Activated T-helper 1 cell treated with anti-CD3 and anti-CD28 coated beads, Interleukin-12 subunit alpha, Interleukin-12 subunit beta, Interleukin-2, Interleukin-4 antibody, amounts not matched to agents 30 ng/mL and 10 ng/mL and 1 ng/mL, durations not matched to agents 14 hours and 24 hours and 36 hours (primary cell): ENCODE measurements at regions of chr1 and their contacts with region 1.

Region 1: DNA sequence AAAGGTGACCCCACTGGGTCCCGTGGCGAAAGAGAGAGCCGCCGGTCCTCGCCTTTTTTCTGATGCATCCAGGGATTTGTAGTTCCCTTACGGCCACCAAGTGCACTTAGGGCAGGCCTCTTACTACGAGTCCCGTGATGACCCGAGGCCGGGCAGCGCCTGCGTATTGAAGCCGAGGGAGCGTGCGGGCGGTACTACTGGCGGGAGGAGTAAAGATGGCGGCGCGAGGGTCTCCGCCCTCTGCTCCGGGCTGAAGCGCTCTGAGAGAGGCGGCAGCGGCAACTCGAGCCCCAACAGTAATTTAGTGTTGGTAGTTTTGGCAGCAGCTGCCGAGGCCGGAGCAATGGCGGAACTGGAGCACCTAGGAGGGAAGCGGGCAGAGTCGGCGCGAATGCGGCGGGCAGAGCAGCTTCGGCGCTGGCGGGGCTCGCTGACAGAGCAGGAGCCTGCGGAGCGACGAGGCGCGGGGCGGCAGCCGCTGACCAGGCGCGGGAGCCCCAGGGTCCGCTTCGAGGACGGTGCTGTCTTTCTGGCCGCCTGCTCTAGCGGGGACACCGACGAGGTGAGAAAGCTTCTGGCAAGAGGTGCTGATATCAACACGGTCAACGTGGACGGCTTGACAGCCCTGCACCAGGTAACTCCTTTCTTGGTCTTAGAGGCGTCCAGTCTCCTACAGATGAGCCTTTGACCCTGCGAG is at the start of gene PPP1R12B:
- DNase-seq: peak; percentile 96
- H3K4me3 Mint-ChIP-seq: peak within 1 kb of the TSS; percentile 90
- H3K27ac Mint-ChIP-seq: peak within 1 kb of the TSS; percentile 90
- H3K4me1 Mint-ChIP-seq: peaks cover 34% of the 10 kb centered on the region
- H3K27me3 Mint-ChIP-seq: no peaks in the 10 kb centered on the region
- total RNA-seq, gene PPP1R12B: 11.1 and 15.8 TPM in 2 replicates

Region 2: DNA sequence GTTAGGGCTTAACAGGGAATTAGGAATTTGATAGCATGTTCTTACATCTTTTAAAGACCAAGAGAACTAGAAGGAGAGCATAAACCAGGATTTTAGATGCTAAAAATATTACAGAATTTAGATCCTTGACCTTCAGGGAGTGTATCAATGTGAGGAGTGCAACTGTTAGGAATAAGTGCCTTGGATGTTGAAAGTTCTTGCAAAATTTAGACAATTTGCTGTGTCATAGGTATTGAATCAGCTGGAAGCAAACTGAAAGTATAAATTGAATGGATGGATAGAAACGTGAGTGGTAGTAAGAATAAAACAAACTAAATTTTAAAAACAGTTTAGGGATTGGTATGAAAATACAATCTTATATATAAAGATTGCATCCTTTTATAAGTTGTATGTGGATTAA is 27.6 kb after region 1 on chr1:
- intact Hi-C with region 1: loop called (anchors 1 kb)
- DNase-seq: no peak
- H3K4me3 Mint-ChIP-seq: no peak overlapping the region
- H3K27ac Mint-ChIP-seq: no peak overlapping the region
- H3K4me1 Mint-ChIP-seq: peaks cover 14% of the 10 kb centered on the region
- H3K27me3 Mint-ChIP-seq: peaks cover 2% of the 10 kb centered on the region

Region 3: DNA sequence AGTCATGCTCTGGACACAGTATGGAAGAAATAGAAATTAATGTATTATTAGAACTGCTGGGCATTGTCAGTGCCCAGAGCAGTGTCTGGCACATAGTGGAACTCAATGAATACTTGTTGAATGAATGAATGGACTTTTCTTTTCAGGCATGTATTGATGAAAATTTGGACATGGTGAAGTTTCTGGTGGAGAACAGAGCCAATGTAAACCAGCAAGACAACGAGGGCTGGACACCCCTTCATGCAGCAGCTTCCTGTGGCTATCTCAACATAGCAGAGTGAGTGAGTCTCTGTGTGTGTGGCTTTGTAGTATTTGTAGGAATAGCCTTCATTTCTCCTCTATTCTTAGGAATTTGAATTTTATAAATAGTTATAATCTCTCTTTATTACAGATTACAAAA is 68.0 kb after region 1 on chr1:
- intact Hi-C with region 1: no loop called
- DNase-seq: no peak
- H3K4me3 Mint-ChIP-seq: no peak overlapping the region
- H3K27ac Mint-ChIP-seq: no peak overlapping the region
- H3K4me1 Mint-ChIP-seq: no peaks in the 10 kb centered on the region
- H3K27me3 Mint-ChIP-seq: no peaks in the 10 kb centered on the region

Region 4: DNA sequence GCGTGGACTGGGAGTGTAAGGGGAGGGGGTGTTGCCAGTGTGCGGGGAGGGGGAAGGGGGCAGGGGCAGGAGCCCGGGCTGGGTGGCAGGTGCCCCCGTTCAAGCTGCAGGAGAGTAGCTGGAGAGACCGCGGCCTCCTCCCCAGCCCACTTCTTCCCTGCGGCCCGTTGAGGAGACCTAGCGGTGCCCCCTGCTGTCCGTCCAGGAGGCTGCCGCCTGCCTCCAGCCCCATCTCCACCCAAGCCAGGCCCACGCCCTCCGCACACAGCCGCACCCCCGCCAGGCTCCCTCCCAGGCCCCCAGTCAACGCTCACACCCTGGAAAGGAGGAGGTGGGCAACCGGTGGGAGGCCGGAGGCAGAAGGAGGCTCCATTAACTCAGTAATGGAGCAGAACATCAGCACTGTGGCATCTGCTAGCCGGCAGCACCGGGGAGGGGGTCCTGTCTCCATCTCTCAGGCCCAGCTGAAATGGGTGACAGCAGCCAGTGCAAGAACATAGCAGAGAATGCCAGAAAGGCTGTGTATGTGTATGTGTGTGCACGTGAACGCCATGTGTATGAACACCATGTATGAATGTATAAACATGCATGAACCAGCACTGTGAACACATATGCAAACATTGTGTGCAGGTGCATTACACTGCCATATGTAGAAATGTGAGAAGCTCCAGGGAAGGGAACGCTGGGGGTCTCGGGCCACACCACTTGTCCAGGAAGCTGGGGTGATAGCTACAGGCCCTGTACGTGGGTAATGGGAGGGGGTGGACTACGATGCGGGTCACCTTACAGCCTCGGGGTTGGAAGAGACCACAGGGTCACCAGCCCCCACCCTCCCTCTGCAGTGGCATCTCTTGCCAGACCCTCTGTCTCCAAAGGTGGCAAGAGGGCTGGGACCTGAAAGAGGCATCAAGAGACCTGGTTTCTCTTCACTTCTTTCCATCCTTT is 277.0 kb after region 1 on chr1:
- intact Hi-C with region 1: loop called (anchors 5 kb)
- DNase-seq: peak; percentile 44
- H3K4me3 Mint-ChIP-seq: no peak overlapping the region
- H3K27ac Mint-ChIP-seq: no peak overlapping the region
- H3K4me1 Mint-ChIP-seq: peaks cover 19% of the 10 kb centered on the region
- H3K27me3 Mint-ChIP-seq: peaks cover 36% of the 10 kb centered on the region

Region 5: DNA sequence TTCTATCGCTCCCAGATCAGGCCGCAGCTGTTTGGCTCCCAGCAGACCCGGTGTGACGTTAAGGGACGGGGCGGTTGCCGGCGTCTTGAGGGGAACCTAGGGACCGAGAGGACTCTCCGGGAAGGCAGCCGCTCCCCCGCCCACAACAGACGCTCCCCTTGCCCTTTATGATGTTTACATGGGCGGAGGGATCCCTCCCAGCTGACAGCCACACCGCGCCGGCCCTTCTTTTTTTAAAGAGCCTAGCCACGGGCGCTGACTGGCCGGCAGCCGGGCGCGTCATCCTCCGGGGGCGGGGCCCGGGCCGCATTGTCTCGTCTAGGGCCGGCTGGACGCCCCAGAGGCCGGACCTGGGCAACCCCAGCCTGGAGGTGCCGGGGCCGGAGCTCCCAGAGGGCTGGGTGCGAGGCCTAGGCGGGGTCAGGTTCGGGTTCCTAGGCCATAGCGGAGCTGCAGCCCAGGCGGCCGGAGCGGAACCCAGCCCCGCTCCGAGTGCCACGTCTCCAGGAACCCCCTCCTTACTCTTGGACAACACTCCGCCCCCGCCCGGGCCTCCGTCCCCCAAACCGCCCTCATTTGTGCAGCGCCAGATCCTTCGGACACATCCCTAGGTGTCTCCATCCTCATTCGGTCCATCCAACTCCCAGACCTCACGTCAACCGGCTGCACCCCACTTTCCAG is 462.1 kb after region 1 on chr1 and contains the start of gene PCAT6:
- intact Hi-C with region 1: loop called (anchors 2 kb)
- DNase-seq: peak; percentile 88
- H3K4me3 Mint-ChIP-seq: peak within 1 kb of the TSS; percentile 96
- H3K27ac Mint-ChIP-seq: peak within 1 kb of the TSS; percentile 96
- H3K4me1 Mint-ChIP-seq: peaks cover 55% of the 10 kb centered on the region
- H3K27me3 Mint-ChIP-seq: peaks cover 9% of the 10 kb centered on the region
- total RNA-seq, gene PCAT6: 1.1 and 1.7 TPM in 2 replicates

Region 6: GRCh38 chr1:202926720-202927491 is 578.2 kb after region 1 on chr1 and contains the start of gene KLHL12:
- intact Hi-C with region 1: loop called (anchors 1 kb)
- DNase-seq: peak; percentile 92
- H3K4me3 Mint-ChIP-seq: peak within 1 kb of the TSS; percentile 97
- H3K27ac Mint-ChIP-seq: peak within 1 kb of the TSS; percentile 95
- H3K4me1 Mint-ChIP-seq: peaks cover 34% of the 10 kb centered on the region
- H3K27me3 Mint-ChIP-seq: peaks cover 3% of the 10 kb centered on the region
- total RNA-seq, gene KLHL12: 24.9 and 25.5 TPM in 2 replicates

Region 7: DNA sequence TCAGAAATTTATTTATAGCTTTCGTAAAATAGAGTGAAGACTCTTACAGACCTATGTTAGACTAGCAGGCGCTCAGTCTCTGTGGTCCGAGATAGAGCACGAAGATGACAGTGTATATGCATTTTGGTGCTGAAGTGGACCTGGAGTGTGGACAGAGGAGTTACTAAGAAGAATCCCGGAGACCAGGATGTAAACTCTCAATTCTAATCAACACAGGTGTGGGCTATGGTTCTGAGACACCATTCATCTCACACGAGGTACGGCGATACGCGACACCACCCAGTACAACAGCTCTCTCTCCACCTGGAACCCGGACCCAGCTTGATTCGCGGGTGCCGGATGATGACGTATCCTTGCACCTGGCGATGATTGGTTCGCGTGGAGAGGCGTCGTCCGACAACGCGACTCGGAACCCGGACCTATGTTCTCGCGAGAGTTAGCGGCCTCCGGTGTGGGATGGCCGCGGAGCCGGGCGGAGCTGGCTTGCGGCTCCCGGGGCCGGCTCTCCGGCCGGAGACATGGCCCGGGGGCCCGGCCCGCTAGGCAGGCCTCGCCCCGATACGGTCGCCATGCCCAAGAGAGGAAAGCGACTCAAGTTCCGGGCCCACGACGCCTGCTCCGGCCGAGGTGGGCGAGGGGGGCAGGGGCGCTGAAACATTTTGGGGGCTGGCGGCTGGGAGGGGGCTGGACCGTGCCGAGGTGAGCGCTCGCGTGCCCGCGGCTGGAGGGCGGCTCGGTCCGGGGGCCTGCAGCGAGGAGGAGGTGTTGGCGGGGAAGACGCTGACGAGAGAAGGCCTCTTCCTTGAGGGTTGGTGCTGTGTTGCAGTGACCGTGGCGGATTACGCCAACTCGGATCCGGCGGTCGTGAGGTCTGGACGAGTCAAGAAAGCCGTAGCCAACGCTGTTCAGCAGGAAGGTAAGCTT is 658.6 kb after region 1 on chr1 and contains the start of gene TMEM183A:
- intact Hi-C with region 1: loop called (anchors 5 kb)
- DNase-seq: peak; percentile 95
- H3K4me3 Mint-ChIP-seq: peak within 1 kb of the TSS; percentile 89
- H3K27ac Mint-ChIP-seq: peak within 1 kb of the TSS; percentile 96
- H3K4me1 Mint-ChIP-seq: peaks cover 34% of the 10 kb centered on the region
- H3K27me3 Mint-ChIP-seq: no peaks in the 10 kb centered on the region
- total RNA-seq, gene TMEM183A: 69.9 and 83.6 TPM in 2 replicates

Region 8: DNA sequence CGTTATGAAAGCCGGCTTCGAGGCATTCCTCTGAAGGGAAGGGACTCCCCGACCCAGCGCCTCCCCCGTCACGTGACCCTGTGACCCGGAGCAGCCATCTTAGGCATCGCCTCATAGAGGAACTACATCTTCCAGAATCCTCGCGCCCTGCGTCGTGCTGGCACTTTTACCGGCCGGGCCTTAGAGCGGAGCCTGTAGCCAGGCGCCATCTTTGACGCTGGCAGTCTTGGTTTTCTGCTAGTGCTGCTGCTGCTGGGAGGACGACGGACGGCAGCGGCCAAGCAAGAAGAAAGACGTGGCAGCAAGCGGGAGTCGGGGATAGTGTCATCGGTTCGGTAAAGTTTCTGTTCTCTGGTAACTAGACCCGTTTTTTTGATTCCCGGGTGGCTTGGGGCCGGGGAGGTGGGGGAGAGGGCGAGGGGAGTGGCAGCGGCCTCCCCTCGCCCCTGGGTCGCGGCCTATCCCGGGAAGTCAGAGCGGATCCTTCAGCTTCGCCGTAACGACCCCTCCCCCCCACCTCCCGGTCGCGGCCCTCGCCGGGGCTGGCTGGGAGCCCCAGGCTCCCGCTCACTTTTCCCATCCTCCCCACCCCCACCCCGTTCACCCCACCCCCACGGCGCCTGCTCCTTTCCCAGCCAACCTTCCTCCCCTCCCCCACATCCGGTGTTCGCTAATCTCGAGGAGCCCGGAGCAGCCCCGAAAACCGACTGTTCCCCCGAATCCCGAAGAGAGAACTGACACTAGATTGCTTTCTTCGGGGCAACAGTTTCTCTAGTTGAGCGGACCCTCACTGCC is 1447.0 kb after region 1 on chr1 and contains the starts of genes ZBED6 and ZC3H11A:
- intact Hi-C with region 1: loop called (anchors 10 kb)
- DNase-seq: peak; percentile 99
- H3K4me3 Mint-ChIP-seq: peak within 1 kb of the TSS; percentile 96
- H3K27ac Mint-ChIP-seq: peak within 1 kb of the TSS; percentile 98
- H3K4me1 Mint-ChIP-seq: peaks cover 42% of the 10 kb centered on the region
- H3K27me3 Mint-ChIP-seq: no peaks in the 10 kb centered on the region
- total RNA-seq, gene ZBED6: 19.8 and 21.3 TPM in 2 replicates
- total RNA-seq, gene ZC3H11A: 85.0 and 85.5 TPM in 2 replicates